ENCODE measurements at regions of chr7 and their contacts with region 1.

Region 1: GRCh38 chr7:16564909-16565426 is 38.3 kb downstream of the LRRC72 start:
- DNase-seq: peak; percentile 61
- H3K4me3 ChIP-seq: no peak overlapping the region
- H3K27ac ChIP-seq: no peak overlapping the region
- H3K4me1 ChIP-seq: peaks cover 4 to 16% of the 10 kb centered on the region in 2 experiments; a peak in 2 of 4 replicates
- H3K27me3 ChIP-seq: peaks cover 16% of the 10 kb centered on the region; the same call in 1 of the 2 replicates
- CTCF ChIP-seq: peak; percentile 99
- EP300 ChIP-seq: no peak
- RAD21 ChIP-seq: peak; percentile 98

Region 2: DNA sequence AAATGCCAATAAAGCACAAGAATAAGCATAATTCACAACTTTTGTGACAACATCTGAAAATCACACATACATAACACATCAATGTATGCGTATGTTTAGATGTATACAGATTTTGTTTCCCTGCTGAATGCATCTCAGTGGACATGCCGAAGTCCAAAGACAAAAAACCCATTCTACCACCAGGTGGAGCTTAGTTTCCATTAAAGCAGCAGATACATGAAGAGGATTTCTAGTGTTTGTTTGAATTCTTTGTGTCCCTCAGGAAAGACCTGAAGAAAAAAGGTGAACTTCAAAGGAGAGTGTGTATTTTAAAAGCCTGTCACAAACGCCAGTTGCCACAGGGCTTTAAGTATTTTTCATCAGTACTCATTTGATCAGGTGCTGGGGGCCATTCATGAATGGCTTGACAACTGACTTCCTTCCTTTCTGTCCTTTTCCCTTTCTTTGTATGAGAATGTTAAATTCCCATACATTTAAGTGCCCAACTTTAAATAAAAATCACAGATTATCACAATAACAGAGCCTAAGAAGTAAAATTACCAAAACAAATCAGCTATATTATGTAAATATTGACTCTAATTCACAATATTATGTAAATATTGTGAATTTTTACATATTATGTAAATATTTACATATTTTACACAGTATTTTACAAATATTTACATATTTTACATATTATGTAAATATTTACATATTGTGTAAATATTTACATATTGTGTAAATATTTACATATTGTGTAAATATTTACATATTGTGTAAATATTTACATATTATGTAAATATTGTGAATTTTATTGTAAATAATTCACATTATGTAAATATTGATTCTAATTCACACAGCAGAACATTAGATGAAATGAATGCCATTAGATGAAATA is 486.7 kb before region 1 on chr7:
- CTCF ChIA-PET with region 1: interaction called, 93 read pairs
- POLR2A ChIA-PET with region 1: no interaction called
- DNase-seq: peak; percentile 51
- H3K4me3 ChIP-seq: no peak overlapping the region
- H3K27ac ChIP-seq: no peak overlapping the region
- H3K4me1 ChIP-seq: no peaks in the 10 kb centered on the region; a peak in 1 of 4 replicates
- H3K27me3 ChIP-seq: no peaks in the 10 kb centered on the region; the same call in 1 of the 2 replicates
- CTCF ChIP-seq: peak; percentile 89
- EP300 ChIP-seq: no peak
- RAD21 ChIP-seq: peak; percentile 98

Region 3: DNA sequence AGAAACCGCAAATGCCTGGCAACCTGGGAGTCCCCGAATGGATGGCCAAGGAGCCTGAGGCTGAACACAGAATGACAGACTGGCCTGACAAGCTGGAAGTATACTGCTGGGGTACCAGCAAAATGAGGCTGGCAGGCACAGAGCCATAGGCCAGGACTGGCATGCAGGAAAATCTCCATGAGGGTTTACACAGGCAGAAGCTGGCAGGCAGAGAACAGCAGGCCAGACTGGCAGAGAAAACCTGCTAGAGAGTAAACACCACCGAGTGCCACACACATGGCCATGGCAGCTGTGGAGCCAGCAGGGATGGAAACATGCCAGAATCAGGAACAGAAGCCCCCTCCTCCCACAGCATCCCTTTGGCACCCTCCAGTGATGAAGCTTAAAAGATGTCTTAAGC is 207.0 kb before region 1 on chr7:
- CTCF ChIA-PET with region 1: interaction called, 25 read pairs
- POLR2A ChIA-PET with region 1: no interaction called
- DNase-seq: peak; percentile 62
- H3K4me3 ChIP-seq: no peak overlapping the region
- H3K27ac ChIP-seq: peak overlapping the region in 1 of 2 experiments; percentile 76; a peak in 2 of 4 replicates
- H3K4me1 ChIP-seq: peaks cover 0 to 21% of the 10 kb centered on the region in 2 experiments; a peak in 2 of 4 replicates
- H3K27me3 ChIP-seq: no peaks in the 10 kb centered on the region
- CTCF ChIP-seq: no peak
- EP300 ChIP-seq: no peak; a peak in 1 of 4 replicates
- RAD21 ChIP-seq: peak; percentile 73

Region 4: DNA sequence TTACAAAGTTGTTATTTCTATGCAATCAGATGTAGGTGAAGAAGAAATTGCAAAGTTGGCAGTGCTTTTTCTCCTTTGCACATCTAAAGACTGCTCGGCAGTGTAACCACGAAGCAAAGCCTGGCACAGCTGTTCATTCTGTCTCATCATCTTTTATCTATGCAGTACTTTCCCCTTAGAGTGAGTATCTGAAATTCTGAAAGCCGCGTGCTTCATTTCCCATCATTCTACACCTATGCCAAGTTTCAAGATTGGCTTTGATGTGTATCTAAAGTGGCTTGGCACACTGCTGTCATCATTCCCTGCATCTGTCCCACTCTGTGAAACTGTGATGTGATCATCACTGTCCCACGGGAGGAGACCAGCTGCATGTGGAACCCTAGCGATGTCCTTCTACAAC is 114.6 kb before region 1 on chr7:
- CTCF ChIA-PET with region 1: interaction called, 10 read pairs
- POLR2A ChIA-PET with region 1: no interaction called
- DNase-seq: no peak
- H3K4me3 ChIP-seq: no peak overlapping the region
- H3K27ac ChIP-seq: no peak overlapping the region
- H3K4me1 ChIP-seq: no peaks in the 10 kb centered on the region; a peak in 1 of 4 replicates
- H3K27me3 ChIP-seq: no peaks in the 10 kb centered on the region; the same call in 1 of the 2 replicates
- CTCF ChIP-seq: no peak
- EP300 ChIP-seq: no peak
- RAD21 ChIP-seq: no peak

Region 5: GRCh38 chr7:16579216-16579615 is 14.2 kb after region 1 on chr7:
- CTCF ChIA-PET with region 1: interaction called, 16 read pairs
- POLR2A ChIA-PET with region 1: no interaction called
- DNase-seq: no peak
- H3K4me3 ChIP-seq: no peak overlapping the region
- H3K27ac ChIP-seq: no peak overlapping the region
- H3K4me1 ChIP-seq: peaks cover 0 to 8% of the 10 kb centered on the region in 2 experiments; a peak in 2 of 4 replicates
- H3K27me3 ChIP-seq: no peaks in the 10 kb centered on the region; the same call in 1 of the 2 replicates
- CTCF ChIP-seq: no peak
- EP300 ChIP-seq: no peak
- RAD21 ChIP-seq: no peak

Region 6: GRCh38 chr7:16657656-16658279 is 92.8 kb after region 1 on chr7:
- CTCF ChIA-PET with region 1: no interaction called
- POLR2A ChIA-PET with region 1: no interaction called
- DNase-seq: no peak
- H3K4me3 ChIP-seq: no peak overlapping the region
- H3K27ac ChIP-seq: peak overlapping the region; percentile 2 to 6; a peak in 2 of 4 replicates
- H3K4me1 ChIP-seq: peaks cover 15% of the 10 kb centered on the region in 2 experiments; a peak in 3 of 4 replicates
- H3K27me3 ChIP-seq: no peaks in the 10 kb centered on the region
- CTCF ChIP-seq: peak; percentile 29; the same call in 1 of the 2 replicates
- EP300 ChIP-seq: no peak
- RAD21 ChIP-seq: no peak

Region 7: DNA sequence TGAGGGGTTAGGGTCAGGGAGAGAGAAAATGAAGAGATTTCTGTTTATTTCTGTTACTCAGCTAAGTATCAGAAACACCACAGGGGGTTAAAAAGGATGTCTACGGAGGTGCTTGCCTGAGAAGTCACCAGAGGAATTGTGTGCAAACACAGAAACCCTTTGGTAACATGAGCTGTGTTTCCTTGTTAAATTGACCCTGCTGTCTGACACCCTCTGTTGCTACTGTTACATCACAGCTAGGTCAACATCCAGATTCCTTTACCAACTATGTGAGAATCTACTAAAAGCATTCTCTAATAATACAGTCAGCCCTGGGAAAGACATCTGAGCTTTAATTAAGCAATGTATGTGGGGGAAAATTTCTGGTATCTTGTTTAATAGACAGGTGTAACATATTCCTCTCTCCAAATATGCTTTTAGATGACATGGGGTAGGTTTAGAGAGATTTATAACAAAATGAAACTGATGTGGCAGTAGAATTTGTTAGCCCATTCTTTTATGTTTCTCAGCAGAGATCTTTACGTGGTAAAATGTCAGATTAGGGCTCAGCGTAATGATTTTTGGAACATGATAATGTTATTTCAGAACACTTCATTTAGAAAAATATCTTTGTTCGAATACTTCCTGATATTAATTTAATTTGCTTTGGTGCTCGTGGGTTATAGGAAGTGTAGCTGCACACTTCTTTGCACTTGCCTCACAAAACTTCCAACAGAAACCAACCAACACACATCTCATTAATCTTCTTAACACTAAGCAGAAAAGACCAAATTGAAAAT is 565.5 kb after region 1 on chr7:
- CTCF ChIA-PET with region 1: no interaction called
- POLR2A ChIA-PET with region 1: no interaction called
- DNase-seq: no peak
- H3K4me3 ChIP-seq: no peak overlapping the region
- H3K27ac ChIP-seq: no peak overlapping the region
- H3K4me1 ChIP-seq: no peaks in the 10 kb centered on the region
- H3K27me3 ChIP-seq: peaks cover 43% of the 10 kb centered on the region; the same call in 1 of the 2 replicates
- CTCF ChIP-seq: no peak
- EP300 ChIP-seq: no peak
- RAD21 ChIP-seq: no peak

Measured in SK-N-SH (cell line).